ENCODE measurements at regions of chr19 and their contacts with region 1.

Region 1: GRCh38 chr19:10259162-10259905 is 7.3 kb downstream of the MRPL4 start:
- DNase-seq: peak; percentile 69 to 91
- H3K4me3 ChIP-seq: no peak overlapping the region
- H3K27ac ChIP-seq: no peak overlapping the region
- H3K4me1 ChIP-seq: peaks cover 0 to 2% (median 0%) of the 10 kb centered on the region in 4 experiments; a peak in 2 of 7 replicates
- H3K27me3 ChIP-seq: no peaks in the 10 kb centered on the region
- CTCF ChIP-seq: peak; percentile 76 to 86 (median 81)
- EP300 ChIP-seq: no peak
- POLR2A ChIP-seq: no peak
- RAD21 ChIP-seq: peak; percentile 76 to 80

Region 2: GRCh38 chr19:10230861-10231611 is 28.3 kb before region 1 on chr19 and contains the start of gene S1PR2:
- CTCF ChIA-PET with region 1: interaction called, 11 read pairs
- POLR2A ChIA-PET with region 1: interaction called, 4 read pairs
- DNase-seq: peak in 1 of 2 experiments; percentile 87
- H3K4me3 ChIP-seq: peak within 1 kb of the TSS; percentile 61 to 88 (median 78)
- H3K27ac ChIP-seq: peak within 1 kb of the TSS; percentile 83
- H3K4me1 ChIP-seq: peaks cover 3 to 7% (median 3%) of the 10 kb centered on the region in 4 experiments; a peak in 4 of 7 replicates
- H3K27me3 ChIP-seq: 0 out of 7 replicates have a peak, but pooled peaks cover 0 to 3% (median 0%) of the 10 kb centered on the region in 4 experiments
- CTCF ChIP-seq: no peak
- EP300 ChIP-seq: no peak
- POLR2A ChIP-seq: peak; percentile 43 to 52
- RAD21 ChIP-seq: no peak
- total RNA-seq, gene S1PR2: 18.7 and 19.4 TPM in 2 replicates

Region 3: GRCh38 chr19:10279737-10280442 is 20.6 kb after region 1 on chr19:
- CTCF ChIA-PET with region 1: interaction called, 19 read pairs
- POLR2A ChIA-PET with region 1: interaction called, 3 read pairs
- DNase-seq: no peak
- H3K4me3 ChIP-seq: no peak overlapping the region
- H3K27ac ChIP-seq: no peak overlapping the region
- H3K4me1 ChIP-seq: peaks cover 0 to 5% (median 2%) of the 10 kb centered on the region in 4 experiments; a peak in 1 of 7 replicates
- H3K27me3 ChIP-seq: no peaks in the 10 kb centered on the region
- CTCF ChIP-seq: no peak
- EP300 ChIP-seq: no peak
- POLR2A ChIP-seq: no peak
- RAD21 ChIP-seq: no peak

Region 4: GRCh38 chr19:10344780-10345179 is 85.4 kb after region 1 on chr19:
- CTCF ChIA-PET with region 1: interaction called, 11 read pairs
- POLR2A ChIA-PET with region 1: no interaction called
- DNase-seq: no peak
- H3K4me3 ChIP-seq: no peak overlapping the region
- H3K27ac ChIP-seq: no peak overlapping the region
- H3K4me1 ChIP-seq: no peaks in the 10 kb centered on the region; a peak in 1 of 7 replicates
- H3K27me3 ChIP-seq: no peaks in the 10 kb centered on the region
- CTCF ChIP-seq: no peak
- EP300 ChIP-seq: no peak
- POLR2A ChIP-seq: no peak
- RAD21 ChIP-seq: no peak